MCF 10A (cell line): ENCODE measurements at regions of chr3 and their contacts with region 1.

Region 1: GRCh38 chr3:58491506-58492402 is at the start of gene KCTD6:
- DNase-seq: peak; percentile 91
- H3K4me3 Mint-ChIP-seq: peak within 1 kb of the TSS; percentile 78
- H3K27ac Mint-ChIP-seq: peak within 1 kb of the TSS; percentile 50
- H3K4me1 Mint-ChIP-seq: peaks cover 33% of the 10 kb centered on the region
- H3K27me3 Mint-ChIP-seq: no peaks in the 10 kb centered on the region
- CTCF ChIP-seq: peak; percentile 73
- total RNA-seq, gene KCTD6: 9.9 and 10.6 TPM in 2 replicates

Region 2: DNA sequence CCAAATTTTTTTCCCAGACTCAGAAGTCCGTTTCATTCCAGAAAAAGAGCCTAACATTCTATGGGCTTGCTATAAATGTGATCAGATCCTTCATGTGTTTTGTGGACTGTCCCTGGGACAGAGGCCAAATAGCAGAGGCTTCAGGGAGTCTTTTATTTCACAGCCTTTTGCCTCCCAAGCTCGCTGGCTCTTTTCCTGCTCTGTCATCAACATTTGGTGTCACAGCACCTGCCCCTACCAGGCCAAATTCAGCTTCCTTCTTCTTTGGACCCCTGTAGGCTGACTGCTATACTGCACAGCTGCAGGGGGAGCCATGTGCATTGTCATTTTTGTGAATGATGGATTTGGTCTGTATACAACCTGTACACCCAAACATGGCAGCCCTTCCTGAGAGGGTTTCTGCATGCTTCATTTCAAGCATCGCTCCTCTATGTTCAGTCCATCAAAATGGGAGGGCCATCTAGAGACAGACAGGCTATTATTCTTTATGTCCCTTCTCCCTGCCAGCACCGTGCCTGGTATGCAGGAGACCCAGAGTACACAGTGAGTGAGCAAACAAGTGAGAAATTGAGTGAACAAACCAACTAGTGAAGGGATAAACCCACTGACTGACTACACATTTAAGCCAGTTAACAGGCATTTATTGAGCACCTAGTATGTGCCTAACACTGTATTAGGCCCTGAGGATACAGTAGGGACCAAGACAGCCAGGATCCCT is 203.6 kb before region 1 on chr3:
- CTCF ChIA-PET with region 1: no interaction called
- POLR2A ChIA-PET with region 1: no interaction called
- intact Hi-C with region 1: no loop called
- DNase-seq: no peak
- H3K4me3 Mint-ChIP-seq: no peak overlapping the region
- H3K27ac Mint-ChIP-seq: no peak overlapping the region
- H3K4me1 Mint-ChIP-seq: no peaks in the 10 kb centered on the region
- H3K27me3 Mint-ChIP-seq: no peaks in the 10 kb centered on the region
- CTCF ChIP-seq: no peak

Region 3: GRCh38 chr3:58332575-58333188 is 159.1 kb before region 1 on chr3 and contains the start of gene PXK:
- CTCF ChIA-PET with region 1: interaction called, 14 read pairs
- POLR2A ChIA-PET with region 1: interaction called, 5 read pairs
- intact Hi-C with region 1: loop called (anchors 1 kb)
- DNase-seq: peak; percentile 71
- H3K4me3 Mint-ChIP-seq: peak within 1 kb of the TSS; percentile 78
- H3K27ac Mint-ChIP-seq: peak within 1 kb of the TSS; percentile 93
- H3K4me1 Mint-ChIP-seq: peaks cover 22% of the 10 kb centered on the region
- H3K27me3 Mint-ChIP-seq: no peaks in the 10 kb centered on the region
- CTCF ChIP-seq: no peak
- total RNA-seq, gene PXK: 55.1 and 62.2 TPM in 2 replicates

Region 4: GRCh38 chr3:58433400-58434169 is 58.2 kb before region 1 on chr3 and contains the start of gene PDHB:
- CTCF ChIA-PET with region 1: interaction called, 6 read pairs
- POLR2A ChIA-PET with region 1: interaction called, 27 read pairs
- intact Hi-C with region 1: loop called (anchors 1 kb)
- DNase-seq: peak; percentile 87
- H3K4me3 Mint-ChIP-seq: peak within 1 kb of the TSS; percentile 93
- H3K27ac Mint-ChIP-seq: peak within 1 kb of the TSS; percentile 40
- H3K4me1 Mint-ChIP-seq: peaks cover 21% of the 10 kb centered on the region
- H3K27me3 Mint-ChIP-seq: no peaks in the 10 kb centered on the region
- CTCF ChIP-seq: no peak
- total RNA-seq, gene PDHB: 52.2 and 62.2 TPM in 2 replicates

Region 5: DNA sequence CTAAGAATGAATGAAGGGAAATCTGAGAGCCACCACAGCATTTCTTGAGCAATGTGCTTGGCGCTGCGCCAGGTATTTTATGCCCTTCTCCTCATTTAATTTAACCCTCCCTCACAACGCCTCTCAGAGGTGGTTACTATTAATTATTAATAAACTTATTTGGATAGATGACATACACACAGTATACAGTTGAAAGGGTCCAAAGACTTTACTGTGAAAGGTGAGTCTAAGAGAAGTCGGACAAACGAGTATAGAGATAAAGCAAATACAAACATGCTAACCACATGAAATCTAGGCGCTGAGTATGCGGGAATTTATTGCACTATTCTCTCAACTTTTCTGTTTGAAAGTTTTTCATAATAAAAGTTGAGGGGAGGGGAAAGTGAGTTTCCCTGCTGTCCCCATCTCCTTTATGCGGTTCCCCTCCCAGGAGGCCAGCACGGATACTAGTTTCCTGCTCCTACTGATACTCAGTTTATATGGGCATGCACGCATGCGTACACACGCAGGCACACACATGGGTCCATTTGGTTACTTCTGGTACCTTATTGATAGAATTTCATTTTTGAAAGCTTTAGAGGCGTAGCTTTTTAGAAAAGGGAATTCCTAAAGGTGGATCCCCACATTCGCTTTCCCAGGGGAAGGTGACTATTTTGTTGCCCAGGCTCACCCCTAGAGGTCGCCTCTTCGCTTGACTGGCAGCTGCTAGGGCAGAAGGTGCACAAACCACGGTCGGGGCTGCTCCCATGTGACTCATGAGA is 28.4 kb before region 1 on chr3:
- CTCF ChIA-PET with region 1: interaction called, 60 read pairs
- POLR2A ChIA-PET with region 1: interaction called, 9 read pairs
- intact Hi-C with region 1: loop called (anchors 1 kb)
- DNase-seq: peak; percentile 95
- H3K4me3 Mint-ChIP-seq: no peak overlapping the region
- H3K27ac Mint-ChIP-seq: peak overlapping the region; percentile 71
- H3K4me1 Mint-ChIP-seq: peaks cover 20% of the 10 kb centered on the region
- H3K27me3 Mint-ChIP-seq: no peaks in the 10 kb centered on the region
- CTCF ChIP-seq: peak; percentile 89

Region 6: DNA sequence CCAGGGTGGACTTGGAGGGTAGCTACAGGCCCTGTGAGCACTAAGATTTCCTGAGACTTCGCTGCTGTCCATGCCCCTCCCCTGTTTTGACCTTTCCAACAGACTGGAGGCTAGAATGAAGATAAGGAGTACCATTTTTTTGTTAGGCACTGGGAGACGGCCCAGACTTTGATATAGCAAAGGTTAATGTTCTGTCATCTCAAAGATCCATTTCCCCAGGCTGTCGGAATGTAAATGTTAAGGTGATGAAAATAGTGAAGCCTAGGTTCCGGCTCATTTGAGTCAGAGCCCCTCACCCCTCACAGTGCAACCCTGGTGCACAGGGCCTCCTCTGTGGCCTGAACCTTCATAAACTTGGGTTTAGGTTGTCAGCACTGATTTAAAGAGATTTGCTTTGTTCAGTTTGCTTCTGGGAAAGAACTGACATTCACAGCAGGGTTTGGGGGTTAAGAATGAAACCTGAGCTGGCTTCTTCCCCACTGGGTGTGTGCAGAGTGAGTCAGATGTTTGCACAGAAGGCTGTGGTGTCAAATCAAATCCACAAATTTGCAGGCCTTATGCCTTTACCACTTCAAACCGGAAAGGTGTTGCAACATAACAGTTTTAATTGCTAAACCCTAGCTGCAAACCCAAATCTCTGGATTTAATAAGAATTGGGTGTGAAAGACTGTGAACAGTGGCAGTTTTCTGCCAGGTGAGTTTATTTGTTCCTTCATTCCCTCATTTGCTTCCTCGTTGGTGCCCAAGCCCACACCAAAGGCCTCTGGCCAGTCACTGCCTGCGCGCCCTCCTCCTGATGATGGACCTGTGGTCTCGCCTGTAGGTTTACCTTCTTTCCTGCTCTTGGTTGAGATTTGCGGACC is 20.5 kb before region 1 on chr3:
- CTCF ChIA-PET with region 1: interaction called, 60 read pairs
- POLR2A ChIA-PET with region 1: interaction called, 54 read pairs
- intact Hi-C with region 1: loop called (anchors 2 kb)
- DNase-seq: peak; percentile 98
- H3K4me3 Mint-ChIP-seq: peak overlapping the region; percentile 30
- H3K27ac Mint-ChIP-seq: peak overlapping the region; percentile 82
- H3K4me1 Mint-ChIP-seq: peaks cover 13% of the 10 kb centered on the region
- H3K27me3 Mint-ChIP-seq: no peaks in the 10 kb centered on the region
- CTCF ChIP-seq: no peak

Region 7: DNA sequence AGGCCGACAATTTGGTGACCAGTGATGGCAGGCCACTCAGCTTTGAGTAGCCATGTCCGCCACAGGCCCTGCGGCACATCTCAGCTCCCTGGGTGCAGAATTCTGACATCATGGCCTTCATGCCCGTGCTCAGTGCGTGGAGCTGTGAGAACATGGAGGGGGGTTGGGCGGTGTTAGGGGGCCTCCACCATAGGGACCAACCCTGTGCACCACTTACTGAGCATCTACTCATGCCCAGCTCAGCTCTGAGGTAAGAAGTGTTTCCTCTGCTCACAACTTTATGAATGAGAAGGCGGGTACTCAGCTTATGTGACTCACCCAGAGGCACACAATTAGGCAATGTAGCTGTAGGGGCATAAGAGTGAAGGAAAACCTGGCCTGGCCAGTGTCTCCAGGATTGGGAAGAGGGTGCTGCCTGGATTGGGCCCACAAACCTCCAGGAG is 34.8 kb after region 1 on chr3:
- CTCF ChIA-PET with region 1: interaction called, 59 read pairs
- POLR2A ChIA-PET with region 1: interaction called, 62 read pairs
- intact Hi-C with region 1: no loop called
- DNase-seq: peak; percentile 97
- H3K4me3 Mint-ChIP-seq: peak overlapping the region; percentile 8
- H3K27ac Mint-ChIP-seq: peak overlapping the region; percentile 84
- H3K4me1 Mint-ChIP-seq: peaks cover 29% of the 10 kb centered on the region
- H3K27me3 Mint-ChIP-seq: no peaks in the 10 kb centered on the region
- CTCF ChIP-seq: no peak